AG04449 (cell line): ENCODE measurements at regions of chr6 and their contacts with region 1.

Region 1: DNA sequence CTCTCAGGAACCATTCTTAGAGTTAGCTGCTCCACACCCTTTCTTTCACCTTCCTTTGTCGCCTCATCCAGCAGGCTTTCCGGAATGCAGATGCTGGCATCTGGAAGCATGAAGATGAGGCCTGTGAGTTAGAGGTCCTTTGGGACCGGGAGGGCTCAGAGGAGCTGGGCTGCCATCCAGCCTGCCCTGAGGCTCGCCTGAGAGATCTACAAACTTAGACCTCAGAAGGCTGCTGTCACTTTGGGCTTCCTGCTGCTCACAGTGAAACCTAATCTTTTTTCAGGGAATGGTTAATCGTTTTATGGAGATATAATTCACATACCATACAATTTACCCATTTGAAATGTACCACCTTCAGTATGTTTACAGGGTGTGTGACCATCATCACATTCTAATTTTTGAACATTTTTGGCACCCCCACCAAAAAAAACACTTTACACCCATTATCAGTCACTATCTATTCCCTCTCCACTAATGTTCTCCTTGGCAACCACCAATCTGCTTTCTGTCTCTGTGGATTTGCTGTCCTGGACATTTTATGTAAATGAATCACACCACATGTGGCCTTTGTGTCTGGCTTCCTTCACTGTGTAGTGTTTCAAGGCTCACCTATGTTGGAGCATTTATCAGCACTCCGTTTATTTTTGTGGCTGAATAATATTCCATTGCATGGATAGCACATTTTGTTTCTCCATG is 20.0 kb upstream of the MPC1 start:
- DNase-seq: no peak
- H3K4me3 ChIP-seq: no peak overlapping the region
- CTCF ChIP-seq: no peak

Region 2: DNA sequence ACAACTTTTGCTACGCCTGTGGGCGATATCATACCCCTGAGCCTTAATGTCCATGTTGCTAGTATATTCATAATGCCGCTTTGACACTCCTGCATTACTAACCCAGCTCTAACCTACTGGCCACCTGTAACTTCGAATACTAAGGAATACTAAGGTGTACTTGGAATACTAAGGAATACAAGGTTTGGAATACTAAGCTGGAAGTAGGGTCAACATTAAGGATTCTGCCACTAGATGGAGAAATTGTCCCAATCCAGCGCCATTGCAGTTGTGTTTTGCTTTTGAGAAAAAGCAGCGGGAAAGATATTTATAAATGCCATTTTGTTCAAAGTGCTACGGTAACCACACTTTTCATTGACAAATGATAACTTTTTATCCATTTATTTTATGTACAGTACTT is 245.8 kb before region 1 on chr6:
- CTCF ChIA-PET with region 1: interaction called, 16 read pairs
- POLR2A ChIA-PET with region 1: no interaction called
- DNase-seq: no peak
- H3K4me3 ChIP-seq: no peak overlapping the region
- CTCF ChIP-seq: no peak

Region 3: GRCh38 chr6:166275714-166276166 is 127.0 kb before region 1 on chr6:
- CTCF ChIA-PET with region 1: interaction called, 153 read pairs
- POLR2A ChIA-PET with region 1: no interaction called
- DNase-seq: no peak
- H3K4me3 ChIP-seq: no peak overlapping the region
- CTCF ChIP-seq: peak; percentile 98

Region 4: DNA sequence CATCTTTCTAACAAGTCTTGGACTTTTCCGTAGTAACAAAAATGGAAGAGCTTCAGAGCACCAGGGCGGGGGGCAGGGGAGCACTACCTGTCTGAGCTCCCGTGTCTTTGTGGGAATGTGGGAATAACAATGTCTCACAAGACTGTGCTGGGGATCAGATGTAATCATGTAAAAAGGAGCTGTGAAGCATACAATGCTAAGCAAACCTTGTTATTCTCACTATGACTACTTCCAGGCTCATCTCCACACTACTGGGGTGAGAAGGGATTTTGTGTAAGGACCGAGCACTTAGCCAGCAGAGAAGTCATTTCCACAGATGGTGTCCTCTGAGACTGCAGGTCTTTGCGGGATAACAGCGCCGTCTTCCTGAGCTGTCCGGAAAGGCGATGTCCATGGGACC is 121.6 kb before region 1 on chr6:
- CTCF ChIA-PET with region 1: interaction called, 153 read pairs
- POLR2A ChIA-PET with region 1: no interaction called
- DNase-seq: no peak
- H3K4me3 ChIP-seq: no peak overlapping the region
- CTCF ChIP-seq: no peak

Region 5: DNA sequence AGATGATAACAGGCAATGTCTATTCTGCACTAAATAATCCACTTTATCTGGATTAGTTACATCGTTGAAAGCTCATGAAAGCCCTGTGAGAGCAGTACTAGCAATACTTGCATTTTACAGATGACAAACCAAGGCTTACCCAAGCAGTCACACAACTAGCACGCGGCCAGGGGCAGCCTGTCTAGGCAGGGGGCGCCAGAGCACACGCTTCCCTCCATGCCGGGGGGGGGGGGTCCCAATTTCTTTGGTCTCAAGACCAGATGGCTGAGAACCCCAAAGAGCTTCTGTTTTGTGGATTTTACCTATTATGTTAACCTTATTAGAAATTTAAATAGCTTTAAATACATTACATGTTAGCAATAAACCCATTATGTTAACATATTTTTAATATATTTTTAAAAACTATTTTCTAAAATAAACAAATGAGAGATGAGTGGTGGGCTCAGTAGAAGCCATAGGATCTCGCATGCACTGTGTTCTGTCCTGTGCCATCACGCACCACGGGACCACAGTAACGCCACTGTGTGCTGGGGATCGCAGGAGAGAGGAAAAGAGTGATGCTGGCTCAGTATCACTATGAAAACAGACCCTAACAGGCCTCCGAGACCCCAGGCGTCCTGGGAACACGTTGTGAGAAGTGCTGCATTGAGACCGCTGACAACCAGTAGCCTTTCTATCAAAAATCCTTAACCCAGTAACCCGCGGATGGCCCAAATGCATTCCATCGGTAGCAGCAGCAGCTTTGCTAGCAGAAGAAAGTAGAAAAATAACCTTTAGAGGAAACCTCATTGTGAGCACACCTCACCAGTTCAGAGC is 89.3 kb before region 1 on chr6:
- CTCF ChIA-PET with region 1: interaction called, 26 read pairs
- POLR2A ChIA-PET with region 1: no interaction called
- DNase-seq: no peak
- H3K4me3 ChIP-seq: no peak overlapping the region
- CTCF ChIP-seq: peak; percentile 72

Region 6: DNA sequence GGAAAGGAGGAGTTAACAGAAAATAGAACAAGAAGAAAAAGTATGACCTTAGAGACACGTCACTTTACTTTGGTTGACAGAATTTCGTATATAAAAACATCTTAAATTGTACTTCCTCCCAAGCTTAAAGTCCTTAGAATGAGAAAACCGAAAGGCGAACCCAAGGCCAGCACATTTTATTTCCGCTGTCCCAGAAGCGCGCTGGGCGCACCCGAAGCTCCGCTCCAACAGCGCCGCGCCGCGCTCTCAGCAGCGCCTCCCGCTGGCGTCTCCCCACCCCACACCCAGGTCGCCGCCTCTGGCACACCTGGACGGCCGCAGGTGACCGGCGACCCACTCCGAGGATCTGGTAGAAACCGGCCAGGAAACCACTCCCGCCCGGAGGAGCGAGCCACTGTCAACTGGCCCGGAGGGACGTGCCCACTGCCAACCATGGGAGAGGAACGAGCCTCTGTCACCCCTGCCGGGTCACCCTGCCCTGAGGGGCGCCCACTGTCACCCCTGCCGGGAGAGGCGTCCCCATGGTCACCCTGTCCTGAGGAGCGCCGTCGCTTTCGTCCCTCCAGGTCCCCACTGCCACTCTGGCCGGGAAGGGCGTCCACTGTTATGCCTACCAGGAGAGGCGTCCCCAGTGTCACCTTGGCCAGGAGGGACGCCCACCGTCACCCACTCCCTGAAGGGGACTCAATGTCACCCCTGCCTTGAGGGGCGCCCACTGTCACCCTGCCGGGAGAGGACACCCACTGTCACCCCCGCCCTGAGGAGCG is 20.8 kb before region 1 on chr6:
- CTCF ChIA-PET with region 1: interaction called, 15 read pairs
- POLR2A ChIA-PET with region 1: no interaction called
- DNase-seq: no peak
- H3K4me3 ChIP-seq: peak overlapping the region; percentile 83
- CTCF ChIP-seq: peak; percentile 83

Region 7: DNA sequence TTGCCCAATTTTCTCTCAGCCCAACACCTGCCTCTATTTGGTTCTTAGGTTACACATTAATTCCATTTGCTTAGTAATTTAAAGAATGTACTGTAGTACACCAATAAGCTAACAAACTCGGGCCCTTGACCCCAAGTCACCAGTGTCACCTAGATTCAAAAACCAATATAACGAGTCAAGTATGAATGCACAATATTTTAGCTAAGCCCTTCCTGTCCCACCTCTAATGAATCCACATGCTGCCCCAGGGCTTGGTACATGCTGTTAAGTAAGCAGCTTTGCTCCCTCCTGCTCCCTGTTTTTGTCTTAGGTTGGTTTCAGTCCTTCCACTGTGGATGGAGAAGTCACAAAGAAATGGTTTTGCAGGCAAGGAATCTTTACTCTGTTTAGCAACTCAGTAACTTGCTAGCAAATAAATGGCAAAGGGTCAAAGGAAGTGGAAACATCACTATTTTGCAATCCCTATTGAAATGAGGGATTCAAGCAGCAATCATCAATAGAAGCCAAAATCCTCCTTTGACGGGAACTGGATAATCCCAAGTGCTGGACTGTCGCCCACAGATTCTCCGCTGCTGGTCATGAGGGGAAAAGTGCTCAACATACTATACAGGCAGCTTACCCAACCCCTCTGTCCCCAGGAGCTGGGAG is 15.0 kb before region 1 on chr6:
- CTCF ChIA-PET with region 1: interaction called, 15 read pairs
- POLR2A ChIA-PET with region 1: no interaction called
- DNase-seq: no peak
- H3K4me3 ChIP-seq: no peak overlapping the region
- CTCF ChIP-seq: no peak